Activated T-helper 2 cell treated with anti-CD3 and anti-CD28 coated beads, Interferon-gamma antibody, Interleukin-2, Interleukin-4, amounts not matched to agents 10 μg/mL and 5 μg/mL and 100 μg/mL, durations not matched to agents 14 hours and 24 hours and 36 hours (primary cell): ENCODE measurements at regions of chr16 and their contacts with region 1.

Region 1: DNA sequence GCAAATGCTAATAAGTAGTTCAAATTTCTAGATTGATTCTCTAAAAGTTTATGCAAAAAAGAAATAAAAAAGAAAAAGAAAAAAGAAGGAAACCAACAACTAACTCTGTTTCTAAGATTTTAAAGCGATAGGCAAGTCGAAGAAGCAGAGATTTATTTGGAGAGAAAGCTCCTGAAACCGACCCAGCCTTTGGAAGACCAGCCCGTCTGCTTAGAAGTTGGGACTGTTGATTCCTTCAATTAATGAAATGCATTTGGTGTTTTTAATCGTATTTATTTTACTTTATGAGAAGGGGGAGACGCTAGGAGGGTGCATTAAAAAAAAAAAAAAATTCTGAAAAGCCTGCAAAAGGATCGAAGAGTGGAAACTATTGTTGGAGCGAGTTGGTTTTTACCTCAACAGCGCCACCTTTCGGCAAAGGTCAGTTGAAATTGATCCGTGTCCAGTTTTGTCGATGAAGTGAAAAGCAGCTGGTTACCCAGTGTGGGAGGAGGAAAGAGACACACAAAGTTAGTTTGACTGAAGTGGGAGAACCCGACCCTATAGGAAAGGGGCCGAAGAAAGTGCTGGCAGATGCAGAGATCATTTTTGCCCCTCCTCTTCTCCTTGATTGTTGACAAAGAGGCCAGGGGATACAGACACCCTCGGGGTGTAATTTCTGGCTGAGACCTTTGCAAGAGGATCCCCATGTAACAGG is 1.5 kb upstream of the MAF start:
- DNase-seq: peak; percentile 76
- H3K4me3 Mint-ChIP-seq: peak overlapping the region; percentile 96
- H3K27ac Mint-ChIP-seq: peak overlapping the region; percentile 85
- H3K4me1 Mint-ChIP-seq: peaks cover 47% of the 10 kb centered on the region
- H3K27me3 Mint-ChIP-seq: peaks cover 3% of the 10 kb centered on the region

Region 2: DNA sequence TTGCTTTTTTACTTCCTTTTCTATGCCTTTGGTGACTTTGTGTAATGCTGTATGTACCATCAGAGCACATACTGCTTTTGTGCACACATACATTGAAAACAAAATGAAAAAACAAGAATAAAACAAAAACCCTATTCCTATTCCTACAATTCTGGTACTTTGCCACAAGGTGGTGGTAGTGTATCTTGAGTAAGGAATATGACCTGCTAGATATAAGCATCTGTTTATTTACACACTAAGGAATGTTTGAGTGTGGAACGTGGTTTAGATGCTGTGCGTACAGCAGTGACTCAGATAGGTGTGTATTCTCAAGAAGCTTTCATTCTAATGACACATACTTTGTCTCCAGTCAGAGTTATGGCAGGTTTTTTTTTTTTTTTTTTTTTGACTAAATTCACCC is 896.4 kb before region 1 on chr16:
- intact Hi-C with region 1: loop called (anchors 2 kb)
- DNase-seq: no peak
- H3K4me3 Mint-ChIP-seq: no peak overlapping the region
- H3K27ac Mint-ChIP-seq: no peak overlapping the region
- H3K4me1 Mint-ChIP-seq: peaks cover 6% of the 10 kb centered on the region
- H3K27me3 Mint-ChIP-seq: peaks cover 4% of the 10 kb centered on the region

Region 3: DNA sequence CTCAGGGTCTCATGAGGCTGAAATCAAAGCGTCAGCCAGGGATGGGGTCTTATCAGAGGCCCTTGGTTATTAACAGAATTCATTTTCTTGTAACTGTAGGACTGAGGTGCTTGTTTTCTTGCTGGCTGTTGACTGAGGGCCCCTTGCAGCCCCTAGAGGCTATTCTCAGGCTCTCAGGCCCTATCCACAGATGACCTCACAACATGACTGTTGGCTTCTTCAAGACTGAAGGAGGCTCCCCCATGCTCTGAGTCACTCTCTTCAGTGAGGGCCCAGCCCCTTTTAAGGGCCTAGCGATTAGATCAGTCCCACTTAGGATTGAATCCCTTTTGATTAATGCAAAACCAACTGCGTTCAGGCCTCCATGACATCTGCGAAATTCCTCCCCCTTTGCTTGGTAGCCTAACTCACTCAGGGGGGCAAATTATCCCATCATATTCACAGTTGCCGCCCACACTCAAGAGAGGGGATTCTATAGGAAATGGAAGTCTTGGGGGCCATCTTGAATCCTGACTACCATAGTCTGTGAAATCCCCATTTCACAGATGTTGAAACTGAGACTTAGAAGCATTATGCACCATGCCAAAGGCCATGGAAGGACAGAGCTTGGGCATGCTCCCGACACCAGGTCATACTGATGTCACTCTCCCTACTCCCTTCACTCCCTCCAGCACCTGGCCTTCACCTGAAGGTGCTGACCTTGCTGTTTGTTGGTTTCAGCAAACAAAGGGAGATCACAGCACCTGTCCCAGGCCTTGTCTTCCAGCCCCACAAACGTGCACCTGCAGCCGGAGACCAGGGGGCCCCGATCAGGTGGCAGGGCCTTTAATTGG is 593.8 kb before region 1 on chr16:
- intact Hi-C with region 1: loop called (anchors 5 kb)
- DNase-seq: no peak
- H3K4me3 Mint-ChIP-seq: no peak overlapping the region
- H3K27ac Mint-ChIP-seq: peak overlapping the region; percentile 54
- H3K4me1 Mint-ChIP-seq: peaks cover 24% of the 10 kb centered on the region
- H3K27me3 Mint-ChIP-seq: no peaks in the 10 kb centered on the region

Region 4: DNA sequence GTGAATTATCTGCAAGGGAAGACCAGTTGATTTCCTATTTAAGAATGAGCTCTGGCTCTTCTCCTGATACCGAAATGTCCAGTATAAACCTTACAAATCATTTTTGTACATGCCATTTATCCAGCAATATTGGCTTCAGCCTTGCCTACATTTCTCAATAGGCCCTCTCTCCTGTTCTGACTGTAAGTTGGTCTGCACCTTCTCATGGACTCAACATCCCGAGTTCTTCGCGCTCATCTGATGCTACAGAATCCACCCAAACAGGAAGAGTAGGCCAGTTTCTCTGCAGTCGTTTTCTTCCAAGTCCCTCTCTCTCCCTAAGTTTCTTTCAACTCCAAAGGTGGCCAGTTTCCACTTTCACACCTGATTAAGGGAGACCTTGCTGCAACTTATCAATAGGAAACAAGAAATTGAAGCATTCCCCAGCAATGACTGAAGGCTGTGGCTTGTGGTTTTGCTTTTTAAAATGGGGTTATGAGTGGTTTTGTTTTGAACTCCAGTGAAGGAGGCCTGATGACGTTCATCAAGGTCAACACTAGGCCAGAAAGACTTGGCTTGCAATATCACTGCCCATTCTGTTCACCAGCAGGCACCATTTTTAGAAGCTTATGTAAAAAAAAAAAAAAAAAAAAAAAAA is 384.6 kb before region 1 on chr16:
- intact Hi-C with region 1: loop called (anchors 5 kb)
- DNase-seq: peak; percentile 34
- H3K4me3 Mint-ChIP-seq: no peak overlapping the region
- H3K27ac Mint-ChIP-seq: peak overlapping the region; percentile 13
- H3K4me1 Mint-ChIP-seq: peaks cover 32% of the 10 kb centered on the region
- H3K27me3 Mint-ChIP-seq: no peaks in the 10 kb centered on the region

Region 5: GRCh38 chr16:79451196-79451816 is 150.8 kb before region 1 on chr16:
- intact Hi-C with region 1: loop called (anchors 10 kb)
- DNase-seq: peak; percentile 9
- H3K4me3 Mint-ChIP-seq: no peak overlapping the region
- H3K27ac Mint-ChIP-seq: peak overlapping the region; percentile 58
- H3K4me1 Mint-ChIP-seq: peaks cover 19% of the 10 kb centered on the region
- H3K27me3 Mint-ChIP-seq: peaks cover 3% of the 10 kb centered on the region

Region 6: DNA sequence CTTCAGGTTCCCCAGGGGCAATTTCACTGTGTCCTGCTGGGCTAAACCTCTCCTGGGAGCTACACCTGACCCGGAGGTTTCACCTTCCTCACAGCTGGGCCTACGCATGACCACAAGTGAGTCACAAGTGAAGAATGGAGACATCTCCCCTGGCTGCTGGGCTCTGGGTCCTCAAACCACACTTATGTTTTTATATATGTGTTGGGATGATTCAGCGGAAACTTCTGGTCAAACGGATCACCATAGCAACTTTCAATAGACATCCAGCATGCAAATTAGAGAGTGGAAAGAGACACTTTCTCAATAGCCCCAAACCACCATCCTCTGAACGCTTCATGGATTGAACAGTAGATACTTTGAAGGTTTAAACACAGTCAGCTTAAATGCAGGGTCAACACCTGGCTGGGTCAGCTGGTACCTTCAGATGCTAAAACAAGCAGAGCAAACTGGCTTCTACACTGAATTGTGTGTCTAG is 26.5 kb after region 1 on chr16:
- intact Hi-C with region 1: loop called (anchors 1 kb)
- DNase-seq: peak; percentile 74
- H3K4me3 Mint-ChIP-seq: peak overlapping the region; percentile 9
- H3K27ac Mint-ChIP-seq: peak overlapping the region; percentile 86
- H3K4me1 Mint-ChIP-seq: peaks cover 56% of the 10 kb centered on the region
- H3K27me3 Mint-ChIP-seq: peaks cover 12% of the 10 kb centered on the region

Region 7: GRCh38 chr16:79845033-79845733 is 243.1 kb after region 1 on chr16:
- intact Hi-C with region 1: loop called (anchors 2 kb)
- DNase-seq: no peak
- H3K4me3 Mint-ChIP-seq: peak overlapping the region; percentile 39
- H3K27ac Mint-ChIP-seq: peak overlapping the region; percentile 82
- H3K4me1 Mint-ChIP-seq: peaks cover 38% of the 10 kb centered on the region
- H3K27me3 Mint-ChIP-seq: peaks cover 2% of the 10 kb centered on the region